Right ventricle myocardium inferior (tissue), 1 donor: ENCODE measurements at regions of chr15 and their contacts with region 1.

Region 1: DNA sequence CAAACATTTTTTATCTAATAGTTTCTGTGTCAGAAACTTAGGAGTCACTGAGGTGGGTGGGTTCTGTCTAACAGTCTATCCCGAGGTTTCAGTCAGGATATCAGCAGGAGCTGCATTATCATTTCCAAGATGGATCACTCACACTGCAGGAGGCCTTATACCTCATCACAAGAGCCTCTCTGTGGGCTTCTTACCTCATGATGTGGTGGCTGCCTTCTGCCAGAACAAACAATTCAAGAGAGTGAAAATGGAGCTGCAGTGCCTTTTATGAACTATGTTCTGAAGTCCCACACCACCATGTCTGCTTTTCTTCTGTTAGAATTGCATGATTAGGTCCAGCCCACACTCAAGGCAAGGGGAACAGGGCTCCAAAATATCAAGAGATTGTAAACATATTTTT is 27.9 kb downstream of the RFX7 start:
- DNase-seq: no peak
- ATAC-seq: no peak

Region 2: GRCh38 chr15:56146756-56147155 is 69.0 kb before region 1 on chr15:
- intact Hi-C with region 1: loop called (anchors 2 kb)
- DNase-seq: no peak
- ATAC-seq: no peak